ENCODE measurements at regions of chr10 and their contacts with region 1.

Region 1: GRCh38 chr10:111756217-111757061 is 427.1 kb downstream of the GPAM start:
- DNase-seq: peak; percentile 71
- H3K4me3 Mint-ChIP-seq: peak overlapping the region; percentile 26
- H3K27ac Mint-ChIP-seq: no peak overlapping the region
- H3K4me1 Mint-ChIP-seq: peaks cover 8% of the 10 kb centered on the region
- H3K27me3 Mint-ChIP-seq: peaks cover 15% of the 10 kb centered on the region
- CTCF ChIP-seq: peak; percentile 49

Region 2: GRCh38 chr10:111745982-111746381 is 10.5 kb before region 1 on chr10:
- CTCF ChIA-PET with region 1: interaction called, 13 read pairs
- POLR2A ChIA-PET with region 1: interaction called, 4 read pairs
- intact Hi-C with region 1: no loop called
- DNase-seq: no peak
- H3K4me3 Mint-ChIP-seq: no peak overlapping the region
- H3K27ac Mint-ChIP-seq: no peak overlapping the region
- H3K4me1 Mint-ChIP-seq: no peaks in the 10 kb centered on the region
- H3K27me3 Mint-ChIP-seq: peaks cover 17% of the 10 kb centered on the region
- CTCF ChIP-seq: no peak

Region 3: GRCh38 chr10:111990734-111991133 is 234.3 kb after region 1 on chr10:
- CTCF ChIA-PET with region 1: interaction called, 3 read pairs
- POLR2A ChIA-PET with region 1: no interaction called
- intact Hi-C with region 1: loop called (anchors 1 kb)
- DNase-seq: peak; percentile 18
- H3K4me3 Mint-ChIP-seq: no peak overlapping the region
- H3K27ac Mint-ChIP-seq: no peak overlapping the region
- H3K4me1 Mint-ChIP-seq: peaks cover 12% of the 10 kb centered on the region
- H3K27me3 Mint-ChIP-seq: peaks cover 12% of the 10 kb centered on the region
- CTCF ChIP-seq: no peak